Naive thymus-derived CD8-positive, alpha-beta T cell (primary cell): ENCODE measurements at regions of chrX and their contacts with region 1.

Region 1: DNA sequence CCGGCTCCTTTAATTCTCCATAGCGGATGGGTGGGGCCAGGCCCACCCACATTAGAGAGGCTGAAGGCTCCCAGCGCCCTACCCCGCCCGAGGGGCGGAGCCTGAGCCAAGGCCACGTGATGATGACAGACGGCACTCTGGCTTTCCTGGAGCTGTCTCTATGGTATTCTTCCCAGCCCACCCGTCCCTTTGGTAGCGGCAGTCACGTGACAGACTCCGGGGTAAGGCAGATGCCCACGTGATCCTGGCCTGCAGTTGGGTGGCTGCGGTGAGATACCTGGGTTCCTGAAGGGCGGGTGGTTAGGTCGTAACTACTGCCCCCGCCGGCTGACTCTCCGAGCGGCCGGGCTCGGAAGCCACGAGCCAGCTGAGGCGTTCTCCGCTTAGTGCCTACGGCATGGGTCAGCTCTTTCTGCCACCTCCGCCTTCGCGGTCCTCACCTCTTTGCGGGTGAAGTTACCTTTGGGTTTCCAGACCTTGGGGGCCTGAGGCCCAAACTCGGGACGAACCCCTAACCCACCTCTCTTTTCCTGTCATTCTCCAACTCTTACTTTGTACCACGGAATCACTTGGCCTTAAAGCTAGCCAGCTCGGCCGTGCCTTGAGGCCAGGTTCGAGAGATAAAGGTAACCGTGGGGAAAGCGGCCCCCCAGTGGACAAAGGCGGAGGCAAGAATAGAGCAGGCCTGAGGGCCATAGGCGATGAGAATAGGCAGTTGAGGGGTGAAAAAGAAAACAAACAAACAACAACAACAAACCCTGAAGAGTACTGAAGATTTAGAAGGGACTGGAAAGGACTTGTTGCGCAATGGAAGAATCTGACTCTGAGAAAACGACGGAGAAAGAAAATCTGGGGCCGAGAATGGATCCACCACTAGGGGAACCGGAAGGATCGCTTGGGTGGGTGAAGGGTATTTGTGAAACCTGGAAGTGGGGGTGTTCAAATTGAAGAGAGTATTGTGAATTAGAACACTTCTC is at the start of gene RRAGB:
- DNase-seq: peak; percentile 73 to 96 (median 89)
- ATAC-seq: peak; percentile 95 to 98
- H3K4me3 Mint-ChIP-seq: peak within 1 kb of the TSS; percentile 79 to 93 (median 89)
- H3K27ac Mint-ChIP-seq: peak within 1 kb of the TSS; percentile 90 to 97 (median 92)
- H3K4me1 Mint-ChIP-seq: peaks cover 23 to 45% (median 43%) of the 10 kb centered on the region in 4 donors
- H3K27me3 Mint-ChIP-seq: no peaks in the 10 kb centered on the region
- polyA plus RNA-seq, gene RRAGB: 10.9 to 23.9 (median 15.7) TPM

Region 2: DNA sequence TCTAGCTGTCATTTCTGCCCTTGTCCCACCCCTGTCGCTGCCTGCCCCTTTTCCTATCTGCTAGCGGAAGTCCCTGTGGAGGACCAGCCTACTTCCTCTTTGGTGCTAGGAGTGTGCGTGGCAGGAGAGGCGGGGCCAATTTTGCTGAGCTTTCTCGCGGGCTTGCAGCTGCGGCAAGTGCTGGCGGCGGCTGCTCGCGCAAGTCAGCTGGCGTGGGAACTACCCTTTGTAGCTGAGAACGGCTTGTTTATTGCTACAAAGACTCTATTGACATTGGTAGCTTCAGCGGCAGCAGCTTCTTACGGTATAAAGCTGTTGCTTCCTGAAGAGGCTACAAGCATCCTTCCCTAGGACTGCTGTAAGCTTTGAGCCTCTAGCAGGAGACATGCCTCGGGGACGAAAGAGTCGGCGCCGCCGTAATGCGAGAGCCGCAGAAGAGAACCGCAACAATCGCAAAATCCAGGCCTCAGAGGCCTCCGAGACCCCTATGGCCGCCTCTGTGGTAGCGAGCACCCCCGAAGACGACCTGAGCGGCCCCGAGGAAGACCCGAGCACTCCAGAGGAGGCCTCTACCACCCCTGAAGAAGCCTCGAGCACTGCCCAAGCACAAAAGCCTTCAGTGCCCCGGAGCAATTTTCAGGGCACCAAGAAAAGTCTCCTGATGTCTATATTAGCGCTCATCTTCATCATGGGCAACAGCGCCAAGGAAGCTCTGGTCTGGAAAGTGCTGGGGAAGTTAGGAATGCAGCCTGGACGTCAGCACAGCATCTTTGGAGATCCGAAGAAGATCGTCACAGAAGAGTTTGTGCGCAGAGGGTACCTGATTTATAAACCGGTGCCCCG is 265.6 kb before region 1 on chrX and contains the start of gene MAGEH1:
- POLR2A ChIA-PET with region 1: interaction called, 15 read pairs
- DNase-seq: peak; percentile 59 to 90 (median 81)
- ATAC-seq: peak; percentile 90 to 92
- H3K4me3 Mint-ChIP-seq: peak within 1 kb of the TSS; percentile 90 to 96 (median 94)
- H3K27ac Mint-ChIP-seq: peak within 1 kb of the TSS; percentile 92 to 98 (median 96)
- H3K4me1 Mint-ChIP-seq: peaks cover 5 to 27% (median 17%) of the 10 kb centered on the region in 4 donors
- H3K27me3 Mint-ChIP-seq: no peaks in the 10 kb centered on the region
- polyA plus RNA-seq, gene MAGEH1: 27.4 to 45.1 (median 37.0) TPM

Region 3: GRCh38 chrX:55488593-55489313 is 229.1 kb before region 1 on chrX:
- POLR2A ChIA-PET with region 1: interaction called, 42 read pairs
- DNase-seq: peak; percentile 51 to 82 (median 68)
- ATAC-seq: peak; percentile 74 to 80
- H3K4me3 Mint-ChIP-seq: peak overlapping the region; percentile 90 to 98 (median 94)
- H3K27ac Mint-ChIP-seq: peak overlapping the region; percentile 93 to 99 (median 98)
- H3K4me1 Mint-ChIP-seq: peaks cover 7 to 27% (median 16%) of the 10 kb centered on the region in 4 donors
- H3K27me3 Mint-ChIP-seq: no peaks in the 10 kb centered on the region

Region 4: GRCh38 chrX:56729152-56729850 is 1011.5 kb after region 1 on chrX and contains the start of gene NBDY:
- POLR2A ChIA-PET with region 1: interaction called, 10 read pairs
- DNase-seq: peak in 9 of 10 donors; percentile 7 to 54 (median 30)
- ATAC-seq: peak; percentile 74 to 90
- H3K4me3 Mint-ChIP-seq: peak within 1 kb of the TSS; percentile 85 to 95 (median 92)
- H3K27ac Mint-ChIP-seq: peak within 1 kb of the TSS; percentile 88 to 97 (median 94)
- H3K4me1 Mint-ChIP-seq: peaks cover 2 to 42% (median 22%) of the 10 kb centered on the region in 4 donors
- H3K27me3 Mint-ChIP-seq: no peaks in the 10 kb centered on the region
- polyA plus RNA-seq, gene NBDY: 64.3 to 91.9 (median 73.0) TPM